Left cardiac atrium (tissue), 4 donors: ENCODE measurements at regions of chr19 and their contacts with region 1.

Region 1: DNA sequence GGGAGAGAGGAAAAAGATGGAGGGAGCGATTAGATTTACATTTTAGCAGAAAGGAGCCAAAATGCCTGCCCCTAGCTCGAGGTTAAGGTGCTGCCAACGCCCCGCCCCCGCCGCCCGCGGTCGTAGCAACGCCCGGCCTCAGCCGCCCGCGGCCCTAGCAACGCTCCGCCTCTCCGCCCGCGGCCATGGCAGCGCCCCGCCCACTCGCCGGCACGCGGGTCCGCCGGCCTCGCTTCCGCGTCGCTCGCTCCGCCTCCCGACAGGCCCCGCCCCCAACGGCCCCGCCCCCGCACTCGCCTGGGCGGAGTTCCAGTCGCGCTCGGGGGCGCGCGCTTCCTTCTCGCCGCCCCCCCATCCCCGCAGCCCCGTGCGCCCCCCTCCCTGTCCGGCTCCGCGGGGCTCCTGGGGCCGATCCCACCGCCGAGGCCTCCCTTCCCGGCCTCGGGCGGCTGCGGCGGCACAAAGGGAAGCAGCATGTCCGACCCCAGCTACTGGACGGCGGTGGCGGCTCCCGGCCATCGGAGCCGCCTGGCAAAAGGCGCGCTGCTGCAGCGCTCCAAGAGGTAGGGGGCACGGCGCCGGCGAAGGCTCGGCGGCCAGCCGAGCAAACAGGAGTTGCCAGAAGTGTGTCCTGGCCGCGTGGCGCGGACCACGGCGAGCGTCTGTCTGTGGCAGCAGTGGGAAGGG is 20.3 kb downstream of the MAST3 start:
- DNase-seq: peak; percentile 92
- ATAC-seq: peak; percentile 96

Region 2: GRCh38 chr19:18152444-18152816 is 34.6 kb after region 1 on chr19:
- intact Hi-C with region 1: loop called in 1 of 2 experiments (anchors 5 kb)
- DNase-seq: peak; percentile 97
- ATAC-seq: peak; percentile 64 to 81

Region 3: GRCh38 chr19:18160971-18161635 is 43.3 kb after region 1 on chr19:
- intact Hi-C with region 1: loop called (anchors 5 to 10 kb)
- DNase-seq: peak; percentile 74
- ATAC-seq: peak; percentile 79 to 81

Region 4: DNA sequence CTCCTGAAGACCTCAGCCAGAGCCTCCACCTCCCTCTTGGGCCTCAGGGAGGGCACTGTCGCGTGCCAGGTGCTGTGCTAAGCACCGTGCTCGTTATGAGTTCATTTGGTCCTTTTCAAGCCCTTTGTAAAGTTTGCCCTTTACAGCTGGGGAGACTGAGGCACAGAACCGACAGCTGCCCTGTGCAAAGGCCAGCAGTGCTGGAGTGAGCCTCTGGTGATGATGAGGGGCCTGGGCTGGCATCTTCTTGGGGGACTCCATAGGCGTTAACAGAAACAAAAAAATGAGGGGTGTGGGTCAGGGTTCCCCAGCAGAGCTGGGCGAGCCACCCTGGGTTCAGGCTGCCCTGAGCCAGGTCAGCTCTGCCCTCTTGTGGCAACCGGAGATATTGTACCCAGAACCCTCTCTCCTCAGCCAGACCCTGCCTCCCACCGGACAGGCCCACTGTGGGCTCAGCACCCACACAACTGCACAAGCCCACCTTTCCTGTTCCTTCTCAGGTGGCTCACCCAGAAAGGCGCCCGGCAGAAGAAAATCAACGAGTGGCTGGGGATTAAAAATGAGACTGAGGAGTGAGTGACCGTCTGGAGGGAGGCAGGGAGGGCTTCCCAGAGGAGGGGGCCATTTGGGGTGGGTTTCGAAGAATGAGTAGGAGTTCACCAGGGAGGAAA is 50.3 kb after region 1 on chr19:
- intact Hi-C with region 1: loop called (anchors 5 to 10 kb)
- DNase-seq: peak; percentile 53
- ATAC-seq: peak; percentile 44 to 56

Region 5: GRCh38 chr19:18251587-18252369 is 133.9 kb after region 1 on chr19:
- intact Hi-C with region 1: loop called (anchors 5 kb)
- DNase-seq: peak; percentile 68
- ATAC-seq: peak; percentile 58 to 76